ENCODE measurements at regions of chr15 and their contacts with region 1.

Region 1: DNA sequence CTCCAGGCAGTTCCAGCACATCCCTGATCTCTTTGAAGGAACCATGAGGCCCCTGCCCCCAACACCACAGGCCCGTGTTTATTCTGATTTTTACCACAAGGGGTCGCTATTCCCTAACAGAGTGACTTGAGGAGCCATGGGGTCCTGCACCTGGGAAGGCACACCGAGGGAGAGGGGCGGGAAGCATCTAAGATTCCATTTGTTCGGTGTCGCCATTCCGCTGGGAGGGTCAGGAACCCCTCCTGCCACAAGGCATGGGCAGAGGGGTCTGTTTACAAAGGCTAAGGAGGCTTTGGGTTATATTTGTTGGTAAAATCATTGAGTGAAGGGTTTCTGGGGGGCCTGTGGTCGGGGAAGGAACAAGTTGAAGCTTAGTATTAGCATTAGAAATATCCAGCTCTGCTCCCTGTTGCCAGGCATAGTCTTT is 77.1 kb downstream of the WDR76 start:
- DNase-seq: peak in 37 of 42 donors; percentile 7 to 89 (median 61)

Region 2: DNA sequence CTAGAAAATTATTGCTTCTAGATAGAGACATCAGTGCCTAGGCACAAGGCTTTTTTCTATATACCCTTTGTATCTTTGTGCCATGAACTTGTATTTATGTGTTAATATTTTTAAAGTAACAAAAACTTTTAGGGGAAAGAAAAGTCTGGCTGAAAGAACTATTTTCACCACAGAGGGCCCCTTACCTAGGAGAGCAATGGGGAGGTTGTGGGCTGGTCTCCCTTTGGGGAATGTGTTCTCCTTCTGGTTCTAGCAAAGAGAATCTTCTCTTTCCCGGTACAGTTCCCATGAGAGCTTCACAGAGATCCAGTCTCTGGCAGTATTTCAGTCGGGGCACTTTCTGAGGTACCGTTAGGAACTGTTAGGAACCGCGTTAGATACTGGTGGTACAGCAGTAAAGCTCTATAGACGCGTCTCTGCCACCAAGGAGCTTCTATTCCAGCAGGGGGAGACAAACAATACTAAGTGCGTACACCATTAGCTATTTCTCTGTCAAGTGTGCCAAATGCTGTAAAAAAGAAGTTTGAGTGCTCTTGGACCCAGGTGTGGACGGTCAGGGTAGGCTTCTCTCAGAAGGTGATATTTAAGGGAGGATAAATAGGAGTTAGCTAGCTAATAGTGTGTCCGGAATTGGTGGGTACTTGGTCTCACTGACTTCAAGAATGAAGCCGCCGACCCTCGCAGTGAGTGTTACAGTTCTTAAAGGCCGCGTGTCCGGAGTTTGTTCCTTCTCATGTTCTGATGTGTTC is 678.5 kb before region 1 on chr15:
- intact Hi-C with region 1: no loop called
- DNase-seq: peak in 33 of 42 donors; percentile 23 to 77 (median 49)

Region 3: GRCh38 chr15:44033894-44034293 is 130.0 kb after region 1 on chr15:
- intact Hi-C with region 1: loop called (anchors 10 kb)
- DNase-seq: peak in 37 of 42 donors; percentile 4 to 89 (median 55)

Region 4: DNA sequence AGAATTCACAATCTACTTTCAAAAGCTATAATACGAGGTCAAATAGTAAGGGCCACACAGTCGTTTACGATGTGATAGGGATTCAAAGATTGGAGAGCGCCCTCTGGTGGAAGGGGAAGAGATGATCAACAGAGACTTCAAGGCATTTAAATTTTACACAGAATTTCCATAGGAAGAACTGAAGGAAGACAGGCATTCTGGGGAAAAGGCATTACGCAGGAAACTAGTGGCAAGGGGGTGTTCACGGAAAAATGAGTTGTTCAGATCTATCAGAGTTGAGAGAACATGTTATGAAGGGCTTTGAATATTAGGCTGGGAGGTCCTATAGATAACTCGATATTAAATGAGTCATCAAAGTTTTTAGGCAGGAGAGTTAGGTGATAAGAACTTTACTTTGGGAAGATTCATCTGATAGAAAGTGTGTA is 162.5 kb after region 1 on chr15:
- intact Hi-C with region 1: loop called (anchors 10 kb)
- DNase-seq: peak in 38 of 42 donors; percentile 9 to 91 (median 60)

Region 5: GRCh38 chr15:44102675-44103254 is 198.9 kb after region 1 on chr15:
- intact Hi-C with region 1: no loop called
- DNase-seq: peak in 41 of 42 donors; percentile 15 to 92 (median 72)

Region 6: DNA sequence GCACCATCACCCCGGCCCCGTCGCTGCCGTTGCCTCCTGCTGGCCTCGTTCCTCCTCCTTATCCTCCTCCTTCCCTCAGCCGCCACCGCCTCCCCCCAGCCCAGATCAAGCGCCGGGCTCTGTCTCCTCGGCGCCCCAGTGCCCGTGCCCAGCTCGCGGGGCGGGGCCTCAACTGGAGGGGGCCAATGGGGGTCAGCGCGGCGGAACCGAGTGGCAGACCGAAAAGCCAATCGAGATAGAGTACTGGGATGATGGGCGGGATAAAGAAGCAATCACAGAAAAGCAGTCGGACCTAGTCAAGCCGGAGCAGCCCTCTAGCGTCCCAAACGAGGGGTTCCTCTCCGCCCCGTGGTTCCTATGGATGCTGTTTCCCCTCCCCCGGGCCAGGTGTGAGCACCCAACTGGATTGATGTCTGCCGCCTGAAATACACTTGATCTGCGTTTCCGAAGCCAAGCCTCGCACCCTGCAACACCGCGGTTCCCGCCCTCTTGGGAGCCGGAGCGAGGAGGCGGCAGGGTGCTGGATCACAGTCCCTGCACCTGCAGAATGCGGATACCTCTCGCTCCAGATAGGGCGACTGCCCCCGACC is 291.4 kb after region 1 on chr15 and contains the start of gene FRMD5:
- intact Hi-C with region 1: loop called (anchors 10 kb)
- DNase-seq: peak; percentile 92 to 99 (median 97)